ENCODE measurements at regions of chr2 and their contacts with region 1.

Region 1: DNA sequence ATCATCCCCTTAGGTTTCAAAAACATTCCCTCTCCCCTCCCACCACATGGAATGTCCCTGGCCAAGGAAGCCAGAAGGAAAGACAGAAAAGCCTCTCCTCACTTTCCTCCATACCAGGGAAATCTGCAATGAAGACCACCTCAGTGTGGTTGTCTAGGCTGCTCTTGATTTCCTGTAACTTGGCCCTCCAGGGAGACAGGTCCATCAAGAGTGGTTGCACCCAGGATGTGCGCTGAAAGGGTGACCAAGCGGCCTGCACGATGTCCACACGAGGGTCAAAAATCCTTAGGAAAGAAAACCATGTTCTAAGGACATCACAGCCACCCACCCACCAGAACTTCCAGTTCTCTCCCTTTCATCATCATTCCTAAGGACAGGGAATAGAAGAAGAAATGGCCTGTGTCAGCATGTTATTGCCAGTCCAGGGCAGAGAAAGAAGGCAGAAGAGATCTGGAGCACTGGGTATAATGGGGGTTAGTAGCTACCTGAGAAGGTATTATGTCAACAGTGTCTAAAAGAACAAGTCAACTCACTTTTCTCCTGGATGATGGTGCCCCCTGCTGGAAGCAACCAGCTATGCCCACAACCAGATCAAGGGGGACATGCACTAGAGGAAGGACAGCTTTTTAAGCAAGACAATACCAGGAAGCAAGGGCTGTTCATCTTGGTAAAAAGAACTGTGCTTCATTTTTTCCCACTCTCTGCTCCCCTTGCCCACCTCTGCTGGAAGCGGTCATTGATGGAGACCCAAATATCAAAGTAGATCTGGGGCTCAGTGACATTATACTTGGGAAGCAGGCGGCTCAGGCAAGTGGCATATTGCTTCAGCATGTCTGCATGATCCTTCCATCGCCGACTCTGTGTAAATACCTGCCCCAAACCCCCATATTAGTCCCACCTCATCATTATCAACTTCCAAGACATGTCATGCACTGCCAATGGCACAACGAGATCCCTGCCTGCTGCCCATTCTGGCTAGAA is 9.3 kb downstream of the GGCX start:
- DNase-seq: peak; percentile 83
- ATAC-seq: peak; percentile 57
- H3K4me3 ChIP-seq: no peak overlapping the region
- H3K27ac ChIP-seq: no peak overlapping the region
- H3K4me1 ChIP-seq: peaks cover 4% of the 10 kb centered on the region
- H3K27me3 ChIP-seq: no peaks in the 10 kb centered on the region
- CTCF ChIP-seq: peak; percentile 96
- EP300 ChIP-seq: no peak
- POLR2A ChIP-seq: no peak; a peak in 1 of 4 replicates
- RAD21 ChIP-seq: peak; percentile 97

Region 2: GRCh38 chr2:85302121-85302520 is 249.9 kb before region 1 on chr2:
- CTCF ChIA-PET with region 1: no interaction called
- POLR2A ChIA-PET with region 1: no interaction called
- in situ Hi-C with region 1: no loop called
- intact Hi-C with region 1: loop called (anchors 1 kb)
- DNase-seq: no peak
- ATAC-seq: no peak
- H3K4me3 ChIP-seq: no peak overlapping the region
- H3K27ac ChIP-seq: no peak overlapping the region
- H3K4me1 ChIP-seq: peaks cover 72% of the 10 kb centered on the region
- H3K27me3 ChIP-seq: peaks cover 0 to 11% of the 10 kb centered on the region in 2 experiments; a peak in 3 of 5 replicates
- CTCF ChIP-seq: no peak
- EP300 ChIP-seq: no peak
- POLR2A ChIP-seq: no peak
- RAD21 ChIP-seq: no peak

Region 3: DNA sequence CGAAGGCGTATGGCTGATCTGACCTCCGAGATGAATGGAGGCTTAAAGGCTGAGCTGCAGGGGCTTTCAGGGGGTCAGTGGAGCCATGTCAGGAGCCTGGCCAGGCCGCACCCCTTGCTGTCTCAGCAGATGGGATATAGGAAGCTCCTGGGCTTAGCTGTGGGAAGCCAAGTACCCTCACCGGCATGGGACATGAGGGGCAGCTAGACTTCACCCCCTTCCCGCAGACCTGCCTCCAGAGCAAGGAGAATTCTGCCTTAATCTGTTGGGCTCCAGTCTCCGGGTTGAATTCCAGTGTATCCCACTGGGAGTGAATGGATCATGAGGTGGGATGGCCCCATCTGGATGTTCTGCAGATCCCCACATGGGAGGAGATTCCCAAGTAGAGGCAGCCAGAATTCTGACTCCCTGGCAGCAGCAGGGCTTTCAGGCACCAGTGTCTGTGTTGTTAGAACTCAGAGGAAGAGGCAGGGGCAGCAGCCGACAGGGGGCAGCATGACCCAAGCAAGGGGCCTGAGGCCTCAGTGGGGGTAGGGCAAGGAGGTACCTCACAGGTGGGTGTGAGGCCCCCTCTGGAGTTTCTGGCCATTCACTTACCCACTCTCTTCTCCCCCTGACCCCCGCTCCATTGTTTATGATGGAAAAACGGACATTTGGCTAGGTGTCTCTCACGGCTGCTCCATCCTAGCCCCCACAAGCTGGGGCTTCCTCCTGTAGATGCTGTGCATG is 160.9 kb before region 1 on chr2:
- CTCF ChIA-PET with region 1: interaction called, 41 read pairs
- POLR2A ChIA-PET with region 1: interaction called, 6 read pairs
- in situ Hi-C with region 1: loop called (anchors 5 kb)
- intact Hi-C with region 1: loop called (anchors 1 kb)
- DNase-seq: peak; percentile 59
- ATAC-seq: peak; percentile 92
- H3K4me3 ChIP-seq: no peak overlapping the region
- H3K27ac ChIP-seq: no peak overlapping the region
- H3K4me1 ChIP-seq: no peaks in the 10 kb centered on the region
- H3K27me3 ChIP-seq: no peaks in the 10 kb centered on the region
- CTCF ChIP-seq: peak; percentile 98
- EP300 ChIP-seq: no peak
- POLR2A ChIP-seq: no peak
- RAD21 ChIP-seq: peak; percentile 98

Region 4: DNA sequence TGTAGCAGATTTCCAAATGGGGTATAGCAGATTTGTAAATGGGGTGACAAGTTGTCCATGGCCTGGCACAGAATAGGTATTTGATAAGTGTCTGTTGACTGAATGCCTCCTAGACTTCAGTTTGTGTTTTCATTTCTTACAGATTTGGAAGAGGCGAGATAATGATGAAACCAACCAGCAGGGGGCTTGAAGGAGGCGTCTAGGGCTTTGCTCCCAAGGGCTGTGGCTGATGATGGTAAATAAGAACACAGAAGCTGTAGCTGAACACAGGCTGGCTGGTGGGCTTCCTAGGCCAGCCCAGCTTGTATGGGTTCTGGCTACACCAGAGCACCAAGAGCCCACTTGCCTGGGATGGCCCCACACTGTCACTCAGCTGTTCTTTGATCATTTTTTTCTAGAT is 96.6 kb after region 1 on chr2:
- CTCF ChIA-PET with region 1: no interaction called
- POLR2A ChIA-PET with region 1: no interaction called
- in situ Hi-C with region 1: no loop called
- intact Hi-C with region 1: no loop called
- DNase-seq: no peak
- ATAC-seq: peak; percentile 68
- H3K4me3 ChIP-seq: no peak overlapping the region
- H3K27ac ChIP-seq: no peak overlapping the region
- H3K4me1 ChIP-seq: no peaks in the 10 kb centered on the region
- H3K27me3 ChIP-seq: no peaks in the 10 kb centered on the region
- CTCF ChIP-seq: peak; percentile 35
- EP300 ChIP-seq: no peak
- POLR2A ChIP-seq: no peak
- RAD21 ChIP-seq: no peak